Calu3 (cell line): ENCODE measurements at regions of chr7 and their contacts with region 1.

Region 1: GRCh38 chr7:18666107-18666728 is 170.7 kb downstream of the HDAC9 start:
- DNase-seq: peak; percentile 85
- H3K4me3 Mint-ChIP-seq: no peak overlapping the region
- H3K27ac Mint-ChIP-seq: peak overlapping the region; percentile 13
- H3K4me1 Mint-ChIP-seq: peaks cover 10% of the 10 kb centered on the region
- H3K27me3 Mint-ChIP-seq: no peaks in the 10 kb centered on the region
- CTCF ChIP-seq: peak; percentile 98

Region 2: GRCh38 chr7:19116150-19117090 is 450.2 kb after region 1 on chr7:
- CTCF ChIA-PET with region 1: interaction called, 11 read pairs
- intact Hi-C with region 1: no loop called
- DNase-seq: peak; percentile 35
- H3K4me3 Mint-ChIP-seq: peak overlapping the region; percentile 70
- H3K27ac Mint-ChIP-seq: peak overlapping the region; percentile 48
- H3K4me1 Mint-ChIP-seq: no peaks in the 10 kb centered on the region
- H3K27me3 Mint-ChIP-seq: peaks cover 34% of the 10 kb centered on the region
- CTCF ChIP-seq: no peak

Region 3: DNA sequence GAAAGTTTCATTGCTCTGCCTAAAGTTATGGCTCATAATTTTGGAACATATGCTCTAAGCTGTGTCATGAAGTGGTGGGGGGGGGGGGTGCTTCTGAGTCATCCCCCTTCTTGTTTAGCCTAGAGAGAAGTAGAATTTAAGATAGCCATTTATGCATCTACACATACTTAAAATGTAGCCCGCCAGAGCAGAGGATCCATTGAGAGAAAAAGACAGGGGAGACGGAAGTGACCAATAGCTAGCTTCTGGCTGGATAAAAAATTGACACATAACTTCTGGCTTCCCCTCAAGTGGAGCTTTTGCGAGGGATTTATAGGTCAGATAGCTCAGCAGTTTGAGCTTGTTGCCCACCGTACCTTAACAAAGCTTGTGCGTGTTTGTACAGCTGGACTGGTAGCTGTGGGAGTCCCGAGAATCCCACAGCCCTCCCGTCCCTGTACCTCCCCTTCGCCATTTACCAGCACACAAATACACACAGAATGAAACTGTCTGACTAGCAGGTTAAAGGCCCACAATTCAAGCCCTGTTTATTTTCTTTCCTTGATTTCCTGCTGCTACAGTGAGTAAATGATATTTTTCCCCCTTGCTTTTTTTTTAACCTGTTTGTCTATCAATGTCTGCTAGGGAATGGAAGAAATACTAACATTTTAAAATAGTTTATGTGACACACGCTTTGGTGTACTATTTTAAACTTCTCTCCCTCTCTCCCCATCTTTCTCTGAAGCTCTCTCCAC is 711.6 kb after region 1 on chr7:
- CTCF ChIA-PET with region 1: no interaction called
- intact Hi-C with region 1: no loop called
- DNase-seq: no peak
- H3K4me3 Mint-ChIP-seq: no peak overlapping the region
- H3K27ac Mint-ChIP-seq: no peak overlapping the region
- H3K4me1 Mint-ChIP-seq: no peaks in the 10 kb centered on the region
- H3K27me3 Mint-ChIP-seq: no peaks in the 10 kb centered on the region
- CTCF ChIP-seq: no peak